ENCODE measurements at regions of chr10 and their contacts with region 1.

Region 1: GRCh38 chr10:46019569-46020343 is 10.7 kb downstream of the NCOA4 start:
- DNase-seq: no peak
- H3K4me3 Mint-ChIP-seq: no peak overlapping the region
- H3K27ac Mint-ChIP-seq: no peak overlapping the region
- H3K4me1 Mint-ChIP-seq: peaks cover 58% of the 10 kb centered on the region
- H3K27me3 Mint-ChIP-seq: no peaks in the 10 kb centered on the region

Region 2: GRCh38 chr10:45809837-45810236 is 209.9 kb before region 1 on chr10:
- CTCF ChIA-PET with region 1: no interaction called
- DNase-seq: no peak
- H3K4me3 Mint-ChIP-seq: no peak overlapping the region
- H3K27ac Mint-ChIP-seq: no peak overlapping the region
- H3K4me1 Mint-ChIP-seq: no peaks in the 10 kb centered on the region
- H3K27me3 Mint-ChIP-seq: peaks cover 19% of the 10 kb centered on the region

Region 3: DNA sequence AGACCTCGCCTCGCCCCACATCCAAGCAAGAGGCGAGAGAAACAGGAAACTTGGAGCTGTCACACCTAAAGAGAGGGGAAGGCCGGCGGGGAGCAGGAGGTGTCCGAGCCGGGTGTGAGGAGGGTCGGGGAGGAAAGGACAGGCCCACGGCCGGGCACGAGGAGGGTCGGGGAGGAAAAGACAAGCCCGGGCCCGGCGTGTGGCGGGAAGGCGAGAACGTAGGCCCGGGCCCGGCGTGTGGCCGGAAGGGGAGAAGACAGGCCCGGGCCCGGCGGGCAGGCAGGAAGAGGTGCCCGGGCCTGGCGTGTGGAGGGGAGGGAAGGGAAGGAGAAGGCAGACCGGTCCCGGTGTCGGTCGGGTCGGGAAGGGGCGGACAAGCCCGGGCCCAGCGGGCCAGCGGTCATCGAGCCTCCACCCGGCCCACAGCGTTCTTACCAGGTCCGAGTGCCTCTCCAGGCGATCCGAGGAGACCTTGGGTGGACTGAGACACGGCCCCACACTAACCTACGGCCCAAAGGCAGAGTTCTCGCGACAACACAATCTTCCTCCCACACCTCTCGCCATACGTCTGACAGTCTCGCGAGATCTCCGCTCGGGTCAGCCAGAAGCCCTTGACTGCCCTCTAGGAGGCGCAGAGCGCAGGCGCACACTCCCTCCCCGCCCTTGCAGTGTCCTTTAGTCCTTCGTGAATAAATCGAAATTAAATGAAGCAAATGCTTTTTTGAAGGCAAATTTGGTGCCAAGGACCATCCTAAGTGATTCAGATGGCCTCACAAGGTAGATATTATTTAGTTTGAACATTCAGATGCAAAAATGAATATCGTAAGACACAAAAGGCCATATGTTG is 10.6 kb after region 1 on chr10 and contains the start of gene NCOA4:
- CTCF ChIA-PET with region 1: interaction called, 19 read pairs
- DNase-seq: peak; percentile 98
- H3K4me3 Mint-ChIP-seq: peak within 1 kb of the TSS; percentile 95
- H3K27ac Mint-ChIP-seq: peak within 1 kb of the TSS; percentile 92
- H3K4me1 Mint-ChIP-seq: peaks cover 55% of the 10 kb centered on the region
- H3K27me3 Mint-ChIP-seq: peaks cover 4% of the 10 kb centered on the region

Region 4: DNA sequence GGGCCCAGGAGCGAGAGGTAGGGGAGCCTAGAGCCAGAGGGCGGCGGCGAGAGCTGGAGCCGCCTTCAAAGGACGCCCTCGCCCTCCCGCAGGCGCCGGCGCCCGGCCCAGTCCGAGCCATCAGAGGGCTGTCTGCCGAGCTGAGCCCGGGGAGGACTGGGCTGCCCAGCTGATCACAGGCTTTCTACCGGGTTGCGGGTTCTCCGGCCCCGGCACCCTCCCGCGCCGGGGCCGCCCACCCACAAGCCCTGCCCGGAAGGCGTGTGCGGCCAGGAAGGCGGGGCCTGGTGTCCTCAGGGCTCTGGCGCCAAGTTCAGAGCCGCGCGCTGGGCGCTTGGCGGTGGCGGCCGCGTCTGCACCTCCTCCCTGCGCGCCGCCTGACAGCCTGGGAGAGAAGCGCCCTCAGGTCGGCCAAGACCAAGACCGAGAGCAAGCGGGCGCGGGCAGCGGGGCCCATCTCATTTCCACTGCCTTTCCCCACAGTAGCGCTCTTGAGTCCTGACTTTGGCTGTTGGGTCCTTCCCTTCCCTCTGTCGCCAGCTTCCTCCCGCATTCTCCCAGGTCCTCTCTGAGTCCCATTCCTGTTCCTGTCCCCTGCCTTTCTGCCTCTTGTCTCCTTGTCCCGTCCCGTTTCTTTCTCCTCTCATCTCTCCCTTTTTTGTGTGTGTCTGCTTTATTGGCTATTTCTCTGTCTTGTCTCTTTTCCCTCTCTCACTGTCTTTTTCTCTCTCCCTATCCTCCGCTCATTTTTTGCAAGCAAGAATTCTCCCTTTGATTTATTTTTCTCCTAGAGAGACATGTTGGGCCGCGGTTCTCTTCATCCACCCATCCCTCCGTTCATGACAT is 86.9 kb after region 1 on chr10:
- CTCF ChIA-PET with region 1: no interaction called
- DNase-seq: peak; percentile 65
- H3K4me3 Mint-ChIP-seq: peak overlapping the region; percentile 79
- H3K27ac Mint-ChIP-seq: peak overlapping the region; percentile 0
- H3K4me1 Mint-ChIP-seq: peaks cover 17% of the 10 kb centered on the region
- H3K27me3 Mint-ChIP-seq: peaks cover 42% of the 10 kb centered on the region

Region 5: GRCh38 chr10:46247808-46248569 is 228.2 kb after region 1 on chr10:
- CTCF ChIA-PET with region 1: no interaction called
- DNase-seq: no peak
- H3K4me3 Mint-ChIP-seq: no peak overlapping the region
- H3K27ac Mint-ChIP-seq: no peak overlapping the region
- H3K4me1 Mint-ChIP-seq: peaks cover 7% of the 10 kb centered on the region
- H3K27me3 Mint-ChIP-seq: no peaks in the 10 kb centered on the region

Region 6: GRCh38 chr10:46311501-46312441 is 292.0 kb after region 1 on chr10:
- CTCF ChIA-PET with region 1: no interaction called
- DNase-seq: no peak
- H3K4me3 Mint-ChIP-seq: no peak overlapping the region
- H3K27ac Mint-ChIP-seq: no peak overlapping the region
- H3K4me1 Mint-ChIP-seq: no peaks in the 10 kb centered on the region
- H3K27me3 Mint-ChIP-seq: peaks cover 51% of the 10 kb centered on the region

Measured in activated naive CD4-positive, alpha-beta T cell treated with anti-CD3 and anti-CD28 coated beads, Interleukin-2, amount 10 ng/mL, durations not matched to agents 7 days and 5 days (primary cell).